ENCODE measurements at regions of chr10 and their contacts with region 1.

Region 1: GRCh38 chr10:66209025-66209424 is 716.8 kb upstream of the LRRTM3 start:
- DNase-seq: no peak
- H3K4me3 Mint-ChIP-seq: no peak overlapping the region
- H3K27ac Mint-ChIP-seq: no peak overlapping the region
- H3K4me1 Mint-ChIP-seq: no peaks in the 10 kb centered on the region
- H3K27me3 Mint-ChIP-seq: no peaks in the 10 kb centered on the region

Region 2: GRCh38 chr10:66680886-66681285 is 471.9 kb after region 1 on chr10:
- intact Hi-C with region 1: no loop called
- DNase-seq: no peak
- H3K4me3 Mint-ChIP-seq: no peak overlapping the region
- H3K27ac Mint-ChIP-seq: no peak overlapping the region
- H3K4me1 Mint-ChIP-seq: no peaks in the 10 kb centered on the region
- H3K27me3 Mint-ChIP-seq: no peaks in the 10 kb centered on the region

Region 3: DNA sequence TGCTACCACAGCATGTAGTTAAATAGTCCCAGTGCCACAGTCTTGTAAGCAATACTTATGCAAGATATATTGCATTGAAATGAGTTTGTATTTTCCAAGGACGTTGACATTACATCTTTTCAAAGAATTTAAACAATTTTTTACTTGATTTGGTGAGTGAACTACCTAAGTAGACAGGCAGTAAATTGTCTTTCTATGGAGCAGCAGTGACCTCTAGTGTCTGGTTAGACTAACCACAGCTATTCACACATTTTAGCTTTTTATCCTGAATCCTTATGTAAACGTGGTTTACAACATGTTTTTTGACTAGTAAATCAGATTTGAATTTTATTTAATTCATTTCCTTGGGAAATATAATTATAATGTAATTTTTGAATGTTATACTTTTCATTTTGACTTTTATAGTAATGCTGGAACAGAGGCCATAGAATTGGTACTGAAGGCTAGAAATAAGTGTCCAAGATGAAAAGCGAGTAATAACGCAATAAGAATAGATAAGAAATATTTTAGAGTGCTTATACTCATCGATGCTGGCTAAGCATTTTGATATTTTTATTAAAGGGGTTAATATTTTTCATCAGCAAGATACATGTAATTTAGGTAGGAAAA is 722.4 kb after region 1 on chr10:
- intact Hi-C with region 1: loop called (anchors 10 kb)
- DNase-seq: no peak
- H3K4me3 Mint-ChIP-seq: no peak overlapping the region
- H3K27ac Mint-ChIP-seq: no peak overlapping the region
- H3K4me1 Mint-ChIP-seq: no peaks in the 10 kb centered on the region
- H3K27me3 Mint-ChIP-seq: peaks cover 22% of the 10 kb centered on the region